ENCODE measurements at regions of chr3 and their contacts with region 1.

Region 1: GRCh38 chr3:88003115-88003755 is 55.6 kb downstream of the CGGBP1 start:
- DNase-seq: peak; percentile 87
- H3K4me3 ChIP-seq: no peak overlapping the region
- H3K27ac ChIP-seq: peak overlapping the region; percentile 56
- H3K4me1 ChIP-seq: peaks cover 41% of the 10 kb centered on the region
- H3K27me3 ChIP-seq: no peaks in the 10 kb centered on the region
- CTCF ChIP-seq: peak; percentile 86

Region 2: DNA sequence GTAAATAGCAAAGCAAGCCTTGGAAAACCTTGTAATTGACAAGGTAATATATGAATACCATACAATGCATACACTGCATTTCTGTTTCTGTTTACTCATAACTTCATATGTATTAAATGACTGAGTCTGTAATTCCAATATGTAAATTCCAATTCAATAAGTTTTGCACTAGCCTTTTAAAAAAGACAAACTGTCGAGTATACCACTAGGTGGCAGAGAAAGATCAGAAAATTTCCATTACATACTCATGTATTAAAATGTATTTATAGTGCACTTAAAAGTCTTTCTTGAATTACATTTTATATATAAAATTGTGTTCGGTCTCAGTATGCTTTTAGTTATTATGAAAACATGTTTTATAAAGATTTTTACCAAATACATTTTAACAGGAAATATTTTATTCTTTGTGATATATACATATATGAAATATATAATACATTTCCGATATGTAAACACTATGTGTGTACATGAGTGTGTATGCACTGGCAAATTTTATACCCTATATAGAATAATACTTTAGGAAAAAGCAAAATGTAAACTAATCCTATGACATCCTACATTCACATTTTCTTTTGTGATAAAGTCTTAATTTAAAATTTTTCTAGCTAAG is 1229.0 kb before region 1 on chr3:
- CTCF ChIA-PET with region 1: interaction called, 3 read pairs
- POLR2A ChIA-PET with region 1: no interaction called
- intact Hi-C with region 1: loop called (anchors 5 kb)
- DNase-seq: peak; percentile 63
- H3K4me3 ChIP-seq: no peak overlapping the region
- H3K27ac ChIP-seq: no peak overlapping the region
- H3K4me1 ChIP-seq: no peaks in the 10 kb centered on the region
- H3K27me3 ChIP-seq: no peaks in the 10 kb centered on the region
- CTCF ChIP-seq: peak; percentile 68

Region 3: GRCh38 chr3:86990734-86991481 is 1012.3 kb before region 1 on chr3 and contains the start of gene VGLL3:
- CTCF ChIA-PET with region 1: no interaction called
- POLR2A ChIA-PET with region 1: no interaction called
- intact Hi-C with region 1: loop called (anchors 10 kb)
- DNase-seq: peak; percentile 97
- H3K4me3 ChIP-seq: peak within 1 kb of the TSS; percentile 86
- H3K27ac ChIP-seq: peak within 1 kb of the TSS; percentile 85
- H3K4me1 ChIP-seq: peaks cover 53% of the 10 kb centered on the region
- H3K27me3 ChIP-seq: no peaks in the 10 kb centered on the region
- CTCF ChIP-seq: 0 out of 2 replicates have a peak, but pooled peaks have one; percentile 28
- total RNA-seq, gene VGLL3: 20.7 and 26.8 TPM in 2 replicates

Region 4: DNA sequence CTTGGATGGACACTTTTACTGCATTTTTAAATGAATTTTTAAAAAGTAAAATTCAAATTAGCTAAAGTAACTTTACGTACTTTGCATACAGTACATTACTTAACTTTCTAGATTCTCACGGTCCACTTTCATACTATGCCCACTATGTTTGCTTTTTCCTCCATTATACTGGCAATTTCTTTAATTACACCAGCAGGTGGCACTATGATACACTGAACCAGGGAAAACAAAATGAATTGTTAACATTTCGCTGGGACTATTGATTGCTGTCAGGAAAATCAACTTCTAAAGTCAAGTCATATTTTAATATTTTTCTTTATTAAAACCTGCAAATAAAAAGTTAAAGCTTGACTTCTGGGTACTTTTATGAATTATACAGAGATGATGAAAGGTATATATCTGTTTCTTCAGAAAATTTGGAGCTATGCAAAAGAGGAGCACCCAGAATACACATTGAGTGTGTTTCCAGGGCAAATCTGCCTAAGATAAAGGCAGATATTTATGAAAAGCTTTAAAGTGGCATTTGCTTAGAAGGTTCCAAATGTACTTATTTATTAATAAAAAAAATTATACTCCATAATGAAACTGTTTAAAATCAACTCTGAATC is 705.0 kb before region 1 on chr3:
- CTCF ChIA-PET with region 1: interaction called, 5 read pairs
- POLR2A ChIA-PET with region 1: no interaction called
- intact Hi-C with region 1: loop called (anchors 1 kb)
- DNase-seq: peak; percentile 84
- H3K4me3 ChIP-seq: no peak overlapping the region
- H3K27ac ChIP-seq: peak overlapping the region; percentile 17
- H3K4me1 ChIP-seq: peaks cover 43% of the 10 kb centered on the region
- H3K27me3 ChIP-seq: no peaks in the 10 kb centered on the region
- CTCF ChIP-seq: peak; percentile 85

Region 5: GRCh38 chr3:87503900-87504508 is 499.2 kb before region 1 on chr3:
- CTCF ChIA-PET with region 1: interaction called, 4 read pairs
- POLR2A ChIA-PET with region 1: no interaction called
- intact Hi-C with region 1: loop called (anchors 2 kb)
- DNase-seq: peak; percentile 89
- H3K4me3 ChIP-seq: no peak overlapping the region
- H3K27ac ChIP-seq: no peak overlapping the region
- H3K4me1 ChIP-seq: peaks cover 35% of the 10 kb centered on the region
- H3K27me3 ChIP-seq: no peaks in the 10 kb centered on the region
- CTCF ChIP-seq: peak; percentile 80

Region 6: GRCh38 chr3:87626546-87626945 is 376.7 kb before region 1 on chr3:
- CTCF ChIA-PET with region 1: no interaction called
- POLR2A ChIA-PET with region 1: no interaction called
- intact Hi-C with region 1: loop called (anchors 1 kb)
- DNase-seq: peak; percentile 91
- H3K4me3 ChIP-seq: no peak overlapping the region
- H3K27ac ChIP-seq: peak overlapping the region; percentile 74
- H3K4me1 ChIP-seq: peaks cover 32% of the 10 kb centered on the region
- H3K27me3 ChIP-seq: no peaks in the 10 kb centered on the region
- CTCF ChIP-seq: no peak

Region 7: GRCh38 chr3:87833046-87833377 is 170.2 kb before region 1 on chr3:
- CTCF ChIA-PET with region 1: no interaction called
- POLR2A ChIA-PET with region 1: no interaction called
- intact Hi-C with region 1: no loop called
- DNase-seq: no peak
- H3K4me3 ChIP-seq: no peak overlapping the region
- H3K27ac ChIP-seq: peak overlapping the region; percentile 17
- H3K4me1 ChIP-seq: peaks cover 25% of the 10 kb centered on the region
- H3K27me3 ChIP-seq: no peaks in the 10 kb centered on the region
- CTCF ChIP-seq: no peak

Region 8: GRCh38 chr3:88180398-88180999 is 177.3 kb after region 1 on chr3:
- CTCF ChIA-PET with region 1: no interaction called
- POLR2A ChIA-PET with region 1: no interaction called
- intact Hi-C with region 1: loop called (anchors 2 kb)
- DNase-seq: peak; percentile 88
- H3K4me3 ChIP-seq: no peak overlapping the region
- H3K27ac ChIP-seq: no peak overlapping the region
- H3K4me1 ChIP-seq: peaks cover 25% of the 10 kb centered on the region
- H3K27me3 ChIP-seq: no peaks in the 10 kb centered on the region
- CTCF ChIP-seq: peak; percentile 72

Measured in A673 (cell line).